ENCODE measurements at regions of chr17 and their contacts with region 1.

Region 1: GRCh38 chr17:1829592-1830257 is at the starts of genes RPA1 and SMYD4:
- DNase-seq: peak; percentile 95
- ATAC-seq: peak; percentile 100
- H3K4me3 ChIP-seq: peak within 1 kb of the TSS; percentile 77
- H3K27ac ChIP-seq: peak within 1 kb of the TSS; percentile 82
- H3K4me1 ChIP-seq: peaks cover 15% of the 10 kb centered on the region
- H3K27me3 ChIP-seq: no peaks in the 10 kb centered on the region
- CTCF ChIP-seq: no peak
- total RNA-seq, gene RPA1: 56.7 TPM
- total RNA-seq, gene SMYD4: 17.8 TPM

Region 2: GRCh38 chr17:1716076-1716995 is 113.4 kb before region 1 on chr17:
- intact Hi-C with region 1: loop called (anchors 10 kb)
- DNase-seq: peak; percentile 100
- ATAC-seq: peak; percentile 84
- H3K4me3 ChIP-seq: peak overlapping the region; percentile 90
- H3K27ac ChIP-seq: peak overlapping the region; percentile 98
- H3K4me1 ChIP-seq: peaks cover 50% of the 10 kb centered on the region
- H3K27me3 ChIP-seq: no peaks in the 10 kb centered on the region
- CTCF ChIP-seq: peak; percentile 12

Region 3: GRCh38 chr17:1939981-1940809 is 110.5 kb after region 1 on chr17:
- intact Hi-C with region 1: no loop called
- DNase-seq: no peak
- ATAC-seq: peak; percentile 19
- H3K4me3 ChIP-seq: no peak overlapping the region
- H3K27ac ChIP-seq: no peak overlapping the region
- H3K4me1 ChIP-seq: no peaks in the 10 kb centered on the region
- H3K27me3 ChIP-seq: no peaks in the 10 kb centered on the region
- CTCF ChIP-seq: no peak

Measured in upper lobe of right lung (tissue), 1 donor.